ENCODE measurements at regions of chr2 and their contacts with region 1.

Region 1: GRCh38 chr2:30225131-30225762 is 6.1 kb upstream of the LBH start:
- DNase-seq: peak; percentile 29 to 74 (median 40)
- ATAC-seq: peak; percentile 78
- H3K4me3 Mint-ChIP-seq: peak overlapping the region; percentile 89 to 99 (median 95)
- H3K27ac Mint-ChIP-seq: peak overlapping the region; percentile 97 to 100 (median 99)
- H3K4me1 Mint-ChIP-seq: peaks cover 41 to 87% (median 84%) of the 10 kb centered on the region in 4 donors
- H3K27me3 Mint-ChIP-seq: no peaks in the 10 kb centered on the region

Region 2: DNA sequence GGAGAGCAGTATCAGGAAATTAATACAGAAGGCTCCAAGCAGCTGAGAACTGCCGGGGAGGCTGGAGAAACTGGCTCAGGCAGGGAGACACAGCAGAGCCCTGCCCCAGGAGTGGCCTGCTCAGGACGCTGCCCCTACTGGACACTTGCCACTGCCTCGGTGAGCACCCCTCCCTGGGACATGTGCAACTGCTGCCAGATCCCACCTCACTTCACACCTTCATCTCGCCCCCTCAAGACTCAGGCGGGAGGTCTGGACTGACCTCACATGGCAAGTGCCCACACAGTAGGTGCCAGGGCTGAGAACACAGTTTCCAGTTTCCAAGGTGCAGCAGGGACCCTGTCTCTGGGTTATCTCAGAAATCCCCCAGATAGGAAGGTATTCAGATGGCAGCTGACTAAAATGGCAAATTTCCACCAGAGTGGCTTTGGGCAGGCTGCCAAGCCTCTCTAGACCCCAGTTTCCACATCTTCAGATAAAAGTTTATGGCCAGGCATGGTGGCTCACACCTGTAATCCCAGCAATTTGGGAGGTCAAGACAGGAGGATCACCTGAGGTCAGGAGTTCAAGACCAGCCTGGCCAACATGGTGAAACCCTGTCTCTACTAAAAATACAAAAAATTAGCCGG is 27.6 kb before region 1 on chr2:
- POLR2A ChIA-PET with region 1: no interaction called
- DNase-seq: no peak
- ATAC-seq: no peak
- H3K4me3 Mint-ChIP-seq: no peak overlapping the region
- H3K27ac Mint-ChIP-seq: peak overlapping the region in 2 of 10 donors; percentile 4 to 45
- H3K4me1 Mint-ChIP-seq: peaks cover 1 to 9% (median 3%) of the 10 kb centered on the region in 4 donors
- H3K27me3 Mint-ChIP-seq: peaks cover 0 to 5% (median 0%) of the 10 kb centered on the region in 5 donors

Region 3: DNA sequence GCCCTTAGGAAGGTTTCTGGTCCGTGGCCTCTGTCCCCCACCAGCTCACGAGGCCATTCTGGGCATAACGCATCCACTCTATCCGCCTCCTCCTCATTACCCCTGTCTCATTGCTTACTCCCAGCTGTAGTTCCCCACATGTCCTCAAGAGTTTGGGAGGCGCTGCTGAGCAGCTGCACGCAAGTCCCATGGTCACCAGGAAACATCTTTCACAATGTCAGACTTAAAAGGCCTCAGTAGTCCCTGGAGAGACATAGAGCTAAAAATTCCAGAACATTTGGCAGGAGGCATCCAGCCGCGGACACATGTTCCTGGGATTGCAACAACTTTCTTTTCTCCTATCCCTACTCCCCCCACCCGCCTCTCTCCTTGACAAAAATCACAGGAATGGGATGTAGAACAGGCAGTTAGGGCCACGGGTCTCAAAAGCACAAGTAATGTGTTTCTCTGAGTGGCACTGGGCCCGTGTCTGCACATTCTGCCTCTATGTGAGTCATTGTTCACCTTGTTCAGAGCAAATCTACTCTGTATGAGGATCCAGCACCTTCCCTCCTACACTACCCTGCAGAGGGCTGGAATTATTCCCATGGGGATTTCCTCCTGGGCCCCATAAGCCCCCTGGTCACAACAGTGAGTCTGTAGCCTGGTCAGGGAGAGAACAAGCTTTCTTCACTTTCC is 14.2 kb after region 1 on chr2:
- POLR2A ChIA-PET with region 1: interaction called, 697 read pairs
- DNase-seq: peak; percentile 57 to 87 (median 78)
- ATAC-seq: peak; percentile 55 to 79
- H3K4me3 Mint-ChIP-seq: peak overlapping the region; percentile 84 to 99 (median 95)
- H3K27ac Mint-ChIP-seq: peak overlapping the region; percentile 87 to 100 (median 95)
- H3K4me1 Mint-ChIP-seq: peaks cover 58 to 94% (median 91%) of the 10 kb centered on the region in 4 donors
- H3K27me3 Mint-ChIP-seq: no peaks in the 10 kb centered on the region

Region 4: GRCh38 chr2:30565851-30566358 is 340.7 kb after region 1 on chr2:
- POLR2A ChIA-PET with region 1: no interaction called
- DNase-seq: no peak
- ATAC-seq: no peak
- H3K4me3 Mint-ChIP-seq: no peak overlapping the region
- H3K27ac Mint-ChIP-seq: peak overlapping the region in 2 of 10 donors; percentile 9 to 12
- H3K4me1 Mint-ChIP-seq: peaks cover 0 to 14% (median 4%) of the 10 kb centered on the region in 4 donors
- H3K27me3 Mint-ChIP-seq: no peaks in the 10 kb centered on the region

Measured in naive thymus-derived CD8-positive, alpha-beta T cell (primary cell).